Mammary epithelial cell (primary cell): ENCODE measurements at regions of chr1 and their contacts with region 1.

Region 1: DNA sequence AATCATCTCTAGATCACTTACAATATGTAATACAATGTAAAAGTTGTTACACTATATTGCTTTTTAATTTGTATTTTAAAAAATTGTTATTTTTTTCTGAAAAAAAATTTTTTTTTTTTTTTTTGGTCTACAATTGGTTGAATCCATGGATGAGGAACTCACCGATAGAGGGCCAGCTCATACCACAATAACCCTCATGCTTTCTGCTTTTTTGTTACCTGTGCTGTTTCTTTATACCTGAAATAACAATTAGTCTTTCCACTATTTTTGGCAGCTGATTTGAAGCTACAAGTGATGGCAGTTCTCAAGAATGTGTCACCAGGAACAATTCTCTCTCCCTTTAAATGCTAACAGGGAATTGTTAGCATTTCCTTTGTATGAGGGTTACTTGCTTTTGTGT is 12.0 kb downstream of the SMG7 start:
- DNase-seq: no peak
- H3K4me3 ChIP-seq: no peak overlapping the region
- H3K27ac ChIP-seq: no peak overlapping the region
- H3K4me1 ChIP-seq: peaks cover 18% of the 10 kb centered on the region
- H3K27me3 ChIP-seq: no peaks in the 10 kb centered on the region
- CTCF ChIP-seq: peak; percentile 20 to 52

Region 2: GRCh38 chr1:183543619-183544204 is 59.5 kb after region 1 on chr1:
- CTCF ChIA-PET with region 1: no interaction called
- dilution Hi-C with region 1: no loop called
- in situ Hi-C with region 1: no loop called
- intact Hi-C with region 1: loop called (anchors 1 kb)
- DNase-seq: peak; percentile 55
- H3K4me3 ChIP-seq: no peak overlapping the region
- H3K27ac ChIP-seq: no peak overlapping the region
- H3K4me1 ChIP-seq: no peaks in the 10 kb centered on the region
- H3K27me3 ChIP-seq: no peaks in the 10 kb centered on the region
- CTCF ChIP-seq: peak; percentile 75 to 78